ENCODE measurements at regions of chr20 and their contacts with region 1.

Region 1: GRCh38 chr20:52777171-52777570 is 195.0 kb upstream of the TSHZ2 start:
- DNase-seq: no peak
- H3K4me3 Mint-ChIP-seq: no peak overlapping the region
- H3K27ac Mint-ChIP-seq: no peak overlapping the region
- H3K4me1 Mint-ChIP-seq: no peaks in the 10 kb centered on the region
- H3K27me3 Mint-ChIP-seq: peaks cover 2% of the 10 kb centered on the region

Region 2: DNA sequence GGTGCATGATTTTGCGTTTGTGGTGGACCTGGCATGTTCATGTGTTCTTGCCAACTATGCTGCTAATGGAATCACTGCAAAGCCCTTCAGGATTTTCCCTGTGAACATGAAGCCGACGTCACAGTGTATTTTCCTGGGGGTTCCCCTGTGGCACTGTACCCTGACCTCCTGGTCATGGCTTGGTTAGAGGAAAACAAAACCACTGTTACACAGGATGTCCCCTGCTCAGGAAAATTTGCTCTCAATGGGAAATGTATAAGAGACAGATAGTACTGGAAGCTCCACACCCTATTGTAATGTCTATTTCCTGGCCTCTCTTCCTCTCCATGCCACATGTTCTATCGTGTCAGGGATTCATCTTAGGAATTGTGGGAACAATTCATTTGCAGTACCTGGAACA is 214.7 kb after region 1 on chr20:
- intact Hi-C with region 1: no loop called
- DNase-seq: no peak
- H3K4me3 Mint-ChIP-seq: no peak overlapping the region
- H3K27ac Mint-ChIP-seq: no peak overlapping the region
- H3K4me1 Mint-ChIP-seq: peaks cover 24% of the 10 kb centered on the region
- H3K27me3 Mint-ChIP-seq: no peaks in the 10 kb centered on the region

Region 3: GRCh38 chr20:53032478-53032932 is 255.3 kb after region 1 on chr20:
- intact Hi-C with region 1: loop called (anchors 5 kb)
- DNase-seq: no peak
- H3K4me3 Mint-ChIP-seq: no peak overlapping the region
- H3K27ac Mint-ChIP-seq: no peak overlapping the region
- H3K4me1 Mint-ChIP-seq: peaks cover 63% of the 10 kb centered on the region
- H3K27me3 Mint-ChIP-seq: no peaks in the 10 kb centered on the region